ENCODE measurements at regions of chr10 and their contacts with region 1.

Region 1: GRCh38 chr10:124142960-124143359 is 49.6 kb upstream of the CHST15 start:
- DNase-seq: no peak
- ATAC-seq: peak; percentile 49
- H3K4me3 Mint-ChIP-seq: no peak overlapping the region
- H3K27ac Mint-ChIP-seq: no peak overlapping the region
- H3K4me1 Mint-ChIP-seq: no peaks in the 10 kb centered on the region
- H3K27me3 Mint-ChIP-seq: no peaks in the 10 kb centered on the region
- CTCF ChIP-seq: no peak

Region 2: GRCh38 chr10:123530166-123530870 is 612.6 kb before region 1 on chr10:
- CTCF ChIA-PET with region 1: no interaction called
- POLR2A ChIA-PET with region 1: no interaction called
- intact Hi-C with region 1: no loop called
- DNase-seq: no peak
- ATAC-seq: no peak
- H3K4me3 Mint-ChIP-seq: no peak overlapping the region
- H3K27ac Mint-ChIP-seq: no peak overlapping the region
- H3K4me1 Mint-ChIP-seq: peaks cover 15% of the 10 kb centered on the region
- H3K27me3 Mint-ChIP-seq: no peaks in the 10 kb centered on the region
- CTCF ChIP-seq: no peak

Region 3: GRCh38 chr10:124106241-124106879 is 36.6 kb before region 1 on chr10:
- CTCF ChIA-PET with region 1: no interaction called
- POLR2A ChIA-PET with region 1: no interaction called
- intact Hi-C with region 1: loop called (anchors 5 kb)
- DNase-seq: no peak
- ATAC-seq: peak; percentile 91
- H3K4me3 Mint-ChIP-seq: peak overlapping the region; percentile 69
- H3K27ac Mint-ChIP-seq: peak overlapping the region; percentile 81
- H3K4me1 Mint-ChIP-seq: peaks cover 75% of the 10 kb centered on the region
- H3K27me3 Mint-ChIP-seq: no peaks in the 10 kb centered on the region
- CTCF ChIP-seq: no peak